HepG2 (cell line): ENCODE measurements at regions of chr12 and their contacts with region 1.

Region 1: DNA sequence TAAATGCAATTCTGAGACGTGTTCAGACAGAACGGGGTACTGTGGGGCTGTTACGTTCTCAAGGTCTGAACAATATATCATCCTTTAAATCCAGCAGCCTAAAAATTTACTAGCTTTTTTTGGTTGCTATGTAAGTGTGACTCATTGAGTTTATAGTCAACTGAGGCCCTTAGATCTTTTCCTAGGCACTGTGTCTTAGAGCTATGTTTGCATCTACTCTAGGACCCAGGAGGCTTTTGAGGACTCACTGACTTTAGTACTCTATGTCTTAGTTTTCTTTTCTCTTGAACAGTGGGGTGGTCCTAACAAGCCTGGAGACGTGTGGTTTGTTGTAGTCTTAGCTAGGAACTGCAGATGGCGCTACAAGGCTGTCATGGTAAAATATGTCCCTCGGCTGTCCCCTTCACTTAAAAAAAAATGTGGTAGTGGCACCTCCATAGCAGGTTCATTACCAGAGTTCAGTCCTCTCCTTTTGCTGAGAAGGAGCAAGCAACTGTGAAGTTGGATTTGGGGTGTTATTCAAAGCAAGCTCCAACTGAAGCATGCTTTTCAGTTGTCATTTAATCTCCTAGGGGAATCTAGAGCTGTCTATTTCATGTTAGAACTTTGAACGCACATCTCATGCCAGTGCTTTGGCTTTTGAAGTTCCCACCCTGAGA is 8.7 kb upstream of the SPATS2 start:
- DNase-seq: peak; percentile 72
- ATAC-seq: peak; percentile 92
- H3K4me3 ChIP-seq: peak overlapping the region in 2 of 3 experiments; percentile 15 to 40; a peak in 2 of 6 replicates
- H3K27ac ChIP-seq: no peak overlapping the region
- H3K4me1 ChIP-seq: peaks cover 21% of the 10 kb centered on the region
- H3K27me3 ChIP-seq: no peaks in the 10 kb centered on the region
- CTCF ChIP-seq: peak; percentile 91
- EP300 ChIP-seq: no peak
- POLR2A ChIP-seq: no peak
- RAD21 ChIP-seq: peak; percentile 91

Region 2: DNA sequence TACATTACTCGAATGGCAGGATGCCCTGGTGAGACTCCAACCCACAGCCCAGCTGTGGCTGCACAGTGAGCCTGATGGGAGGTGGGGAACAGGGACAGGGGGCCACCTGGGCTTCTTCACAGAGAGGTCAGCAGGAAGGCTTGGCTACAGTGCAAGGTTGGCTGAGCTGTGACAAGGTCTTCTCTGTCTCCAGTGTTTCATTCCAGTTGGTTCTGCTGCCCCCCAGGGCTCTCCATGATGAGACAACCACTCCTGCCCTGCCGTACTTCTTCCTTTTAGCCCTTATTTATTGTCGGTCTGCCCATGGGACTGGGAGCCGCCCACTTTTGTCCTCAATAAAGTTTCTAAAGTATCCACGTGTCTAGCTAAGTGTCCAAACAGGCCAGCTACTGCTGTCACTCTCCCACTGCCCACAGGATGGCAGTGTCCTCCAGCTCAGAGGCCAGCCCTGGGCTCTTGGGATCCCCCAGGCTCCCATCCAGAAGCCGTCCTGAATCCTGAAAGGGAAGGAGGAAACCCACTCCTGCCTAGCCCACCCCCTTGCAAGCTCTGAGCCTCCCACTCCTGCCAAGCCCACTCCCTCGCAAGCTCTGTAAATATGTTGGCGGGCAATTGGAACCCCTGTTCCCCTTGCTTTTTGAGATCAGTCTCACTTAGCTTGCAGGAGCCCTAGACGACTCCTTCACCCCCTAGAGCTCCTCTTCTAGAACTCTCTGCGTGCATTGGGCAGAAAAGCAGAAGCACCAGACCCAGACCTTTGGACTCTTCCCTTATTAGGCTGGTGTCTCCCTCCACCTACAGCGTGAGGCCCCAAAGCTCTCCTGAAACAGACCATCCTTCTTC is 27.0 kb before region 1 on chr12:
- CTCF ChIA-PET with region 1: interaction called, 23 read pairs
- POLR2A ChIA-PET with region 1: no interaction called
- in situ Hi-C with region 1: no loop called
- intact Hi-C with region 1: no loop called
- DNase-seq: peak; percentile 53
- ATAC-seq: peak; percentile 89
- H3K4me3 ChIP-seq: no peak overlapping the region
- H3K27ac ChIP-seq: no peak overlapping the region
- H3K4me1 ChIP-seq: peaks cover 21% of the 10 kb centered on the region
- H3K27me3 ChIP-seq: peaks cover 0 to 12% of the 10 kb centered on the region in 2 experiments; a peak in 3 of 5 replicates
- CTCF ChIP-seq: peak; percentile 88
- EP300 ChIP-seq: no peak
- POLR2A ChIP-seq: no peak
- RAD21 ChIP-seq: peak; percentile 84

Region 3: GRCh38 chr12:49336645-49337584 is 21.7 kb before region 1 on chr12 and contains the start of gene C1QL4:
- CTCF ChIA-PET with region 1: interaction called, 23 read pairs
- POLR2A ChIA-PET with region 1: no interaction called
- in situ Hi-C with region 1: no loop called
- intact Hi-C with region 1: loop called (anchors 1 kb)
- DNase-seq: peak; percentile 44
- ATAC-seq: peak; percentile 75
- H3K4me3 ChIP-seq: peak within 1 kb of the TSS; percentile 40 to 73 (median 57); a peak in 5 of 6 replicates
- H3K27ac ChIP-seq: no peak within 1 kb of the TSS
- H3K4me1 ChIP-seq: peaks cover 28% of the 10 kb centered on the region
- H3K27me3 ChIP-seq: peaks cover 8 to 63% of the 10 kb centered on the region in 2 experiments; a peak in 4 of 5 replicates
- CTCF ChIP-seq: peak; percentile 86
- EP300 ChIP-seq: no peak
- POLR2A ChIP-seq: no peak
- RAD21 ChIP-seq: peak; percentile 50; the same call in 1 of the 2 replicates
- total RNA-seq, gene C1QL4: not detected in 2 replicates

Region 4: GRCh38 chr12:49347384-49348237 is 11.0 kb before region 1 on chr12:
- CTCF ChIA-PET with region 1: interaction called, 6 read pairs
- POLR2A ChIA-PET with region 1: interaction called, 11 read pairs
- in situ Hi-C with region 1: no loop called
- intact Hi-C with region 1: no loop called
- DNase-seq: peak; percentile 95
- ATAC-seq: peak; percentile 92
- H3K4me3 ChIP-seq: peak overlapping the region; percentile 63 to 86 (median 84)
- H3K27ac ChIP-seq: peak overlapping the region; percentile 85
- H3K4me1 ChIP-seq: peaks cover 64% of the 10 kb centered on the region
- H3K27me3 ChIP-seq: peaks cover 13 to 40% of the 10 kb centered on the region in 2 experiments; a peak in 4 of 5 replicates
- CTCF ChIP-seq: peak; percentile 97
- EP300 ChIP-seq: peak in 1 of 2 experiments; percentile 56; a peak in 1 of 4 replicates
- POLR2A ChIP-seq: peak; percentile 98
- RAD21 ChIP-seq: peak; percentile 73

Region 5: DNA sequence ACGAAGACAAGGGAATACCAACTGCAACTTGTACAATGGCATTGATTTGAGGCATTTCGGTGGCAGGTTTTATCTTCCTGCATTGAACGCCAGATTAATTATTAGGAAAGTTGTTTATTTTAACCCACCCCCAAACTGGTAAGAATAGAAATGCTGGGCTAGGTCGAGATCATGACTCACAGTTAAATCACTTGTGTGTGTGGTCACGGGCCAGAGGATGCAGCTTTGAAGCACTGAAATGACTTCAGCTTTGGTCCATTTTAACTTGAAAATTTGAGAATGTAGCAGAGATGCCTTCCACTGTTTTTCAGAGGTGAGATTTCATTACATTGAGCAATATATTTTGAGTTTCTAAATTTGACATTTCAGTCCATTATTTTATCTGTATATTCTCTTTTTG is 156.7 kb after region 1 on chr12:
- CTCF ChIA-PET with region 1: interaction called, 115 read pairs
- POLR2A ChIA-PET with region 1: interaction called, 10 read pairs
- in situ Hi-C with region 1: no loop called
- intact Hi-C with region 1: loop called (anchors 1 kb)
- DNase-seq: no peak
- ATAC-seq: no peak
- H3K4me3 ChIP-seq: no peak overlapping the region
- H3K27ac ChIP-seq: no peak overlapping the region
- H3K4me1 ChIP-seq: peaks cover 16% of the 10 kb centered on the region
- H3K27me3 ChIP-seq: no peaks in the 10 kb centered on the region
- CTCF ChIP-seq: no peak
- EP300 ChIP-seq: no peak
- POLR2A ChIP-seq: no peak
- RAD21 ChIP-seq: no peak

Region 6: DNA sequence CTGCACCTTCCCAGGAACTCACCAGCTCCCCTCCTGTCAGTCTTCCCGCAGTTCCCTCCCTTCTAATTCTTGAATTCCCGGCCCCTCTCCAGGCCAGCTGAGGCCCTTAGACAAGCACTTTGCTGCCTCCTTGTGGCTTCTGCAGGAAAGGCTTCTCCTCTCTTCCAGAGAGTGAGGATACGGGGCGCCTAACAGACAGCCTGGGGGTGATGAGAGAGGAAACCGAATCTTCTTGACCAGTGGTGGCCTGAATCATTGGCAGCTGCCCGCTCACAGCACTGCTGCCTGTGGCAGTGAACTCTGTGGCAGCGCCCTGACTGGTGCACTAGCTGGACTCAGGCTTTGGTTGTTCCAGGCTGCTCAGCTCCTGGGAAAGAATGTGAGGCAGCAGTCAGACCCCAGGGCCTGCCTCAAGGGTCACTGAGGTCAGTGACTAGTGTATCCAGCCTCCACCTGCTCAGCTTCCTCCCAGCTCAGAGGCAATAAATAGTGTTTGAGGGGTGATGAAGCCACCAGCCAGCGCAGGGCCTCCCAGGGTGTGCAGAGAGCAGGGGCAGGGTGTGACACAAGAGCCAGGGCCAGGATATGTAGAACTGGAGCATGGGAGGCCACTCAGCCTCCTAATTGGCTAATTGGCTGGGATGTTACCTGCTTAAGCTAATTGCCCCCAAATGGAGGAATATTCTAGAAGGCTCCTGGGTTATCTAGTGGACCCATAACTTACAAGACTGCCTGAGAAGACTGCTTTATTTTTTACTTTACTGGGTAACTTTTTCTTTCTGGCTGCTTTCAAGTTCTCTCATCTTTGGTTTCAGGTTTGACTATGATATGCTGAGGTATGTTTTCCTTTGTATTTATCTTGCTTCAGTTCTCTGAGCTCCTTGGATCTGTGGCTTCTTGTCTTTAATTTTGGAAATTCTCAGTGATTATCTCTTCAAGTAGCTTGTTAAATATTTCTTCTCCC is 222.2 kb after region 1 on chr12:
- CTCF ChIA-PET with region 1: interaction called, 14 read pairs
- POLR2A ChIA-PET with region 1: no interaction called
- in situ Hi-C with region 1: no loop called
- intact Hi-C with region 1: loop called (anchors 1 kb)
- DNase-seq: peak; percentile 83
- ATAC-seq: peak; percentile 97
- H3K4me3 ChIP-seq: no peak overlapping the region
- H3K27ac ChIP-seq: no peak overlapping the region
- H3K4me1 ChIP-seq: peaks cover 25% of the 10 kb centered on the region
- H3K27me3 ChIP-seq: no peaks in the 10 kb centered on the region
- CTCF ChIP-seq: peak; percentile 96
- EP300 ChIP-seq: no peak
- POLR2A ChIP-seq: no peak
- RAD21 ChIP-seq: peak; percentile 81